ENCODE measurements at regions of chr20 and their contacts with region 1.

Region 1: DNA sequence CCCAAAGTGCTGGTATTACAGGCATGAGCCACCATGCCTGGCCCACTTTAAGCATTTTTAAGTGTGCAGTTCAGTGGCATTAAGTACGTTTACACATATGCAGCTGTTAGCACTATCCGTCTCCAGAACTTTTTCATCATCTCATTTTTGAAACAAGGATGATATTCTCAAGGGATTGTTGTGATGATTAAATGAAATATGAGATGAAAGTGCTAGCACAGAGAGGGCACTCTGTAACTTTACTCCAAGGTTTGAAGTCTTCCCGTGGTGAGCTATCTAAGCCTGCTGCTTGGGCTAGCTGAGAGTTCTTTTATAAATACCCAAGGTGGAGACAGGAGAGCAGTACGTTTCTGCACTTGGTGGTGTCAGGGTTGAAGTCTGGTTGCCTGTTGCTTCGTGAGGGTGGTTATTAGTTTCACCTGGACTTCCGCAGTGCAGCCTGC is 6.6 kb downstream of the TM9SF4 start:
- H3K4me3 Mint-ChIP-seq: no peak overlapping the region
- H3K27ac Mint-ChIP-seq: peak overlapping the region; percentile 30
- H3K4me1 Mint-ChIP-seq: peaks cover 58% of the 10 kb centered on the region
- H3K27me3 Mint-ChIP-seq: no peaks in the 10 kb centered on the region

Region 2: GRCh38 chr20:32155017-32155981 is 39.2 kb after region 1 on chr20:
- intact Hi-C with region 1: loop called (anchors 5 kb)
- H3K4me3 Mint-ChIP-seq: peak overlapping the region; percentile 35
- H3K27ac Mint-ChIP-seq: peak overlapping the region; percentile 68
- H3K4me1 Mint-ChIP-seq: peaks cover 37% of the 10 kb centered on the region
- H3K27me3 Mint-ChIP-seq: peaks cover 16% of the 10 kb centered on the region